ENCODE measurements at regions of chr19 and their contacts with region 1.

Region 1: GRCh38 chr19:32405431-32406161 is at the start of gene DPY19L3:
- H3K4me3 Mint-ChIP-seq: peak within 1 kb of the TSS; percentile 85
- H3K27ac Mint-ChIP-seq: peak within 1 kb of the TSS; percentile 92
- H3K4me1 Mint-ChIP-seq: peaks cover 13% of the 10 kb centered on the region
- H3K27me3 Mint-ChIP-seq: peaks cover 52% of the 10 kb centered on the region

Region 2: GRCh38 chr19:32345261-32346207 is 60.1 kb before region 1 on chr19 and contains the start of gene ZNF507:
- intact Hi-C with region 1: loop called (anchors 2 kb)
- H3K4me3 Mint-ChIP-seq: peak within 1 kb of the TSS; percentile 84
- H3K27ac Mint-ChIP-seq: peak within 1 kb of the TSS; percentile 45
- H3K4me1 Mint-ChIP-seq: peaks cover 10% of the 10 kb centered on the region
- H3K27me3 Mint-ChIP-seq: peaks cover 91% of the 10 kb centered on the region

Region 3: DNA sequence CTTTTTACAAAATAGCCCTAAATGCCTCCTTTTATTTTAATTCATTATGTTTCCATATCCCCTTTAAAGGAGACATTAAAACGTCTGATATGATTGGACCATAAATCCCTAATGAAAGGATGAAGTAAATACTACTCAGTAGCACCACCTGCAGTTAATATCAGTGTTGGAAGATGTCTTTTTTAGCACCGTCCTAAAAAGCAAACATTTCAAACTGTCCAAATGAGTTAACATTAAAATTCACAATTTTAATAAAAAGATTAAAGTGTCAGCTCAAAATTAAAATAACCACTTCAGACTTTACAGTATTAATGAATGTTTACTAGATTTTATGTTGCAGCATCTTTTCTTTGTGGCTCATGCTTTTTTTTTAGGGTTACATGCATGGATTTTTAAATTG is 47.9 kb before region 1 on chr19:
- intact Hi-C with region 1: no loop called
- H3K4me3 Mint-ChIP-seq: no peak overlapping the region
- H3K27ac Mint-ChIP-seq: no peak overlapping the region
- H3K4me1 Mint-ChIP-seq: peaks cover 8% of the 10 kb centered on the region
- H3K27me3 Mint-ChIP-seq: peaks cover 87% of the 10 kb centered on the region

Region 4: GRCh38 chr19:32570081-32570785 is 164.6 kb after region 1 on chr19:
- intact Hi-C with region 1: loop called (anchors 10 kb)
- H3K4me3 Mint-ChIP-seq: no peak overlapping the region
- H3K27ac Mint-ChIP-seq: no peak overlapping the region
- H3K4me1 Mint-ChIP-seq: no peaks in the 10 kb centered on the region
- H3K27me3 Mint-ChIP-seq: peaks cover 65% of the 10 kb centered on the region

Measured in dendritic cell treated with granulocyte-macrophage colony-stimulating factor and Interleukin-4, amounts not matched to agents 40 ng/mL and 50 ng/mL, for 4 days (primary cell).